Caco-2 (cell line): ENCODE measurements at regions of chr11 and their contacts with region 1.

Region 1: GRCh38 chr11:101848262-101848661 is 66.5 kb upstream of the CEP126 start:
- DNase-seq: peak in 1 of 2 experiments; percentile 41
- H3K4me3 ChIP-seq: no peak overlapping the region
- H3K4me3 Mint-ChIP-seq: no peak overlapping the region
- H3K27ac Mint-ChIP-seq: no peak overlapping the region
- H3K4me1 ChIP-seq: no peaks in the 10 kb centered on the region
- H3K4me1 Mint-ChIP-seq: no peaks in the 10 kb centered on the region
- H3K27me3 ChIP-seq: no peaks in the 10 kb centered on the region
- H3K27me3 Mint-ChIP-seq: no peaks in the 10 kb centered on the region
- CTCF ChIP-seq: peak; percentile 24 to 62

Region 2: DNA sequence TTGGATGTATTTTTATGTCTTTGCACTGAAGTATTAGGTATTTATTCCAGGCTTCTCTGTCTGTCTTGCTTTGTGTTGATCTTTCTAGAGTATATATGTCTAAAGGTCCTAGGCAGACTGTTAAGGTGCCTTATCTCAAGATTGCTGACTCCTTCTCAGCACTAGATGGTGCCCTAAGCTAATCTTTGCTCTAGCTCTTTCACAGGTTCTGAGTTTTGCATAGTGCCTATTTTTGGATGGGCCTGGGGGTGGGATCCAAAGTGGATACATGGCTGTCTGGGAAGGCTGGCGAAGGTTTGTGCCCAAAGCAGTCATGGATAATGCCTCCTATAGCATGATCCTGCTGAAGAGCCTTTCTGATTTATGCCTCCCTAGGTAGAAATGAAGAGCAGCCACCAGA is 419.3 kb before region 1 on chr11:
- CTCF ChIA-PET with region 1: interaction called, 3 read pairs
- POLR2A ChIA-PET with region 1: no interaction called
- intact Hi-C with region 1: loop called (anchors 1 kb)
- DNase-seq: peak in 1 of 2 experiments; percentile 65
- H3K4me3 ChIP-seq: no peak overlapping the region
- H3K4me3 Mint-ChIP-seq: peak overlapping the region; percentile 10
- H3K27ac Mint-ChIP-seq: no peak overlapping the region
- H3K4me1 ChIP-seq: peaks cover 22% of the 10 kb centered on the region
- H3K4me1 Mint-ChIP-seq: peaks cover 23% of the 10 kb centered on the region
- H3K27me3 ChIP-seq: no peaks in the 10 kb centered on the region
- H3K27me3 Mint-ChIP-seq: no peaks in the 10 kb centered on the region
- CTCF ChIP-seq: peak; percentile 74 to 79

Region 3: GRCh38 chr11:101620026-101620425 is 228.2 kb before region 1 on chr11:
- CTCF ChIA-PET with region 1: no interaction called
- POLR2A ChIA-PET with region 1: no interaction called
- intact Hi-C with region 1: loop called (anchors 1 kb)
- DNase-seq: no peak
- H3K4me3 ChIP-seq: no peak overlapping the region
- H3K4me3 Mint-ChIP-seq: no peak overlapping the region
- H3K27ac Mint-ChIP-seq: no peak overlapping the region
- H3K4me1 ChIP-seq: no peaks in the 10 kb centered on the region
- H3K4me1 Mint-ChIP-seq: no peaks in the 10 kb centered on the region
- H3K27me3 ChIP-seq: no peaks in the 10 kb centered on the region; the same call in 1 of the 2 replicates
- H3K27me3 Mint-ChIP-seq: peaks cover under 1% of the 10 kb centered on the region
- CTCF ChIP-seq: peak; percentile 28 to 39

Region 4: DNA sequence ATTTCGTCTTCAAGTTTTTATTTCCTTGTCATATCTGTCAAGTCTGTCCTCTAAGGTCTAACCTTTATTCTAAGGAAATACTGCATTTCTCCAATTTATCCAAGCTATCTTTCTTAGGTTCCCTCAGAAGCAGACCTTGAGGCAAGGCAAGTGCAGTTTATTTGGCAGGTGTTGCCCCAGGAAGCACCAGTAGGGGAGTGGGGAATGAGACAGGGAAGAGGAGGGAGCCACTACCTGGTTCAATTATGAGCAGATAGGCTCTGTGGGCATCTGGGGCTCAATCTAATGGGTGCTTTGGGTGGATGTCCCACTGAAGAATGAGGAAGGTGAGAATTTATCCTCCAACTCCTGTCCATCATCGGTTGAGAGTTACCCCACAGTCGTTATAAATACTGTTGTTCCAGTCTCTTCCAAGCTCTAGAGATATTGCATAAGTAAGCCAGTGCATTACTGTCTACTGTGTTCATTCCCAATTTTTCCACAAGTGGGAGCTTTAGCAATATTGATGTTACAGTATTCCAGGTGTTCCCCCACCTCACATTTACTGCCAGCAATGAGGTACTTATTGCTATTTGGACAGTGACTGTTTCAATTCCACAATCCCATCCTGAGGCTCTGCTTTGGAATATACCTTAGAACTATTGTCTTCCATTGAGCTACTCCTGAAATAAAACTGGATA is 88.4 kb before region 1 on chr11:
- CTCF ChIA-PET with region 1: interaction called, 3 read pairs
- POLR2A ChIA-PET with region 1: no interaction called
- intact Hi-C with region 1: loop called (anchors 1 kb)
- DNase-seq: peak in 1 of 2 experiments; percentile 64
- H3K4me3 ChIP-seq: no peak overlapping the region
- H3K4me3 Mint-ChIP-seq: no peak overlapping the region
- H3K27ac Mint-ChIP-seq: no peak overlapping the region
- H3K4me1 ChIP-seq: no peaks in the 10 kb centered on the region
- H3K4me1 Mint-ChIP-seq: no peaks in the 10 kb centered on the region
- H3K27me3 ChIP-seq: no peaks in the 10 kb centered on the region
- H3K27me3 Mint-ChIP-seq: no peaks in the 10 kb centered on the region
- CTCF ChIP-seq: peak; percentile 51 to 76